ENCODE measurements at regions of chr1 and their contacts with region 1.

Region 1: GRCh38 chr1:11838349-11839272 is 9.0 kb downstream of the NPPA start:
- DNase-seq: peak; percentile 43 to 94 (median 76)
- ATAC-seq: peak; percentile 90
- H3K4me3 ChIP-seq: no peak overlapping the region
- H3K27ac ChIP-seq: no peak overlapping the region
- H3K4me1 ChIP-seq: peaks cover 0 to 26% of the 10 kb centered on the region in 2 donors
- H3K27me3 ChIP-seq: no peaks in the 10 kb centered on the region
- CTCF ChIP-seq: peak; percentile 90 to 94

Region 2: DNA sequence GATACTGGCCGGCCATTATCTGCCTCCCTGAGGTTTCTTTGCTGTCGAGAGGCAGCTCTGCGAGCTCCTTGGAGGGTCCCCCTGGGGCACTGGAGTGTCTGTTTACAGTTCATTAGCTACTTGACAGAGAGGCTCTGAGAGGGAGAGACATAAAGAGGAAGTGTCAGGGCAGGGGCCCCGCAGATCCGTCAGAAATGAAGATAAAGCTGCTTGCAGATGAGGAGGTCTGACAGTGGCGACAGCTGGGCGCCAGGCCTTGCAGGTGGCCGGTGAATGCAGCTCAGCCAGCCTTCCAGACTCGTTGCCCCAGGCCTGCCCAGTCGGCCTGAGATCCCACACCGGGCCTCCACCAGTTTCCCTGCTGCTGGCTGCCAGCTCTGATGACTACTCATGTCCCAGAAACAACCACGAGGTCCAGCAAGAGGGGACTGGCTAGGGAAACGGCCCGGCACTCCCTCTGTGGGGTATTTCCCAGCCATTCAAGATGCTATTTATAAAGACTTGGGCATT is 275.0 kb before region 1 on chr1:
- intact Hi-C with region 1: no loop called
- DNase-seq: no peak
- ATAC-seq: no peak
- H3K4me3 ChIP-seq: no peak overlapping the region
- H3K27ac ChIP-seq: no peak overlapping the region
- H3K4me1 ChIP-seq: no peaks in the 10 kb centered on the region
- H3K27me3 ChIP-seq: peaks cover 0 to 81% of the 10 kb centered on the region in 2 donors
- CTCF ChIP-seq: no peak

Region 3: GRCh38 chr1:11629184-11630016 is 209.2 kb before region 1 on chr1:
- intact Hi-C with region 1: no loop called
- DNase-seq: no peak
- ATAC-seq: no peak
- H3K4me3 ChIP-seq: no peak overlapping the region
- H3K27ac ChIP-seq: no peak overlapping the region
- H3K4me1 ChIP-seq: no peaks in the 10 kb centered on the region
- H3K27me3 ChIP-seq: peaks cover 0 to 57% of the 10 kb centered on the region in 2 donors
- CTCF ChIP-seq: no peak

Region 4: GRCh38 chr1:11761988-11762406 is 76.6 kb before region 1 on chr1 and contains the start of gene C1orf167:
- intact Hi-C with region 1: no loop called
- DNase-seq: peak in 2 of 4 donors; percentile 28 to 87
- ATAC-seq: peak; percentile 77
- H3K4me3 ChIP-seq: no peak within 1 kb of the TSS
- H3K27ac ChIP-seq: no peak within 1 kb of the TSS
- H3K4me1 ChIP-seq: peaks cover 0 to 6% of the 10 kb centered on the region in 2 donors
- H3K27me3 ChIP-seq: peaks cover 8 to 25% of the 10 kb centered on the region in 2 donors
- CTCF ChIP-seq: no peak
- polyA plus RNA-seq, gene C1orf167: 0.24 to 0.64 (median 0.54) TPM in 3 of 6 donors, not detected in the others

Region 5: GRCh38 chr1:11893907-11894251 is 55.3 kb after region 1 on chr1:
- intact Hi-C with region 1: loop called (anchors 5 to 10 kb)
- DNase-seq: peak in 3 of 4 donors; percentile 52 to 93 (median 77)
- ATAC-seq: peak; percentile 97
- H3K4me3 ChIP-seq: no peak overlapping the region
- H3K27ac ChIP-seq: no peak overlapping the region
- H3K4me1 ChIP-seq: peaks cover 0 to 8% of the 10 kb centered on the region in 2 donors
- H3K27me3 ChIP-seq: peaks cover 17 to 43% of the 10 kb centered on the region in 2 donors
- CTCF ChIP-seq: peak; percentile 85 to 90

Region 6: GRCh38 chr1:11907275-11908094 is 68.9 kb after region 1 on chr1:
- intact Hi-C with region 1: no loop called
- DNase-seq: peak; percentile 91 to 98 (median 94)
- ATAC-seq: peak; percentile 88
- H3K4me3 ChIP-seq: peak overlapping the region in 1 of 2 donors; percentile 58
- H3K27ac ChIP-seq: peak overlapping the region; percentile 97 to 98
- H3K4me1 ChIP-seq: peaks cover 0 to 15% of the 10 kb centered on the region in 2 donors
- H3K27me3 ChIP-seq: no peaks in the 10 kb centered on the region
- CTCF ChIP-seq: peak; percentile 66 to 87

Region 7: GRCh38 chr1:11979851-11980675 is 141.5 kb after region 1 on chr1 and contains the start of gene MFN2:
- intact Hi-C with region 1: loop called in 1 of 2 experiments (anchors 10 kb)
- DNase-seq: peak; percentile 96 to 98 (median 97)
- ATAC-seq: peak; percentile 96
- H3K4me3 ChIP-seq: peak within 1 kb of the TSS; percentile 89 to 92
- H3K27ac ChIP-seq: peak within 1 kb of the TSS; percentile 91 to 98
- H3K4me1 ChIP-seq: peaks cover 14 to 65% of the 10 kb centered on the region in 2 donors
- H3K27me3 ChIP-seq: no peaks in the 10 kb centered on the region
- CTCF ChIP-seq: peak in 1 of 2 donors; percentile 23
- polyA plus RNA-seq, gene MFN2: 45.4 to 53.6 (median 49.1) TPM